Posterior cingulate gyrus (tissue), 11 donors: ENCODE measurements at regions of chr1 and their contacts with region 1.

Region 1: GRCh38 chr1:237562242-237562823 is 328.4 kb downstream of the ZP4 start:
- DNase-seq: no peak

Region 2: DNA sequence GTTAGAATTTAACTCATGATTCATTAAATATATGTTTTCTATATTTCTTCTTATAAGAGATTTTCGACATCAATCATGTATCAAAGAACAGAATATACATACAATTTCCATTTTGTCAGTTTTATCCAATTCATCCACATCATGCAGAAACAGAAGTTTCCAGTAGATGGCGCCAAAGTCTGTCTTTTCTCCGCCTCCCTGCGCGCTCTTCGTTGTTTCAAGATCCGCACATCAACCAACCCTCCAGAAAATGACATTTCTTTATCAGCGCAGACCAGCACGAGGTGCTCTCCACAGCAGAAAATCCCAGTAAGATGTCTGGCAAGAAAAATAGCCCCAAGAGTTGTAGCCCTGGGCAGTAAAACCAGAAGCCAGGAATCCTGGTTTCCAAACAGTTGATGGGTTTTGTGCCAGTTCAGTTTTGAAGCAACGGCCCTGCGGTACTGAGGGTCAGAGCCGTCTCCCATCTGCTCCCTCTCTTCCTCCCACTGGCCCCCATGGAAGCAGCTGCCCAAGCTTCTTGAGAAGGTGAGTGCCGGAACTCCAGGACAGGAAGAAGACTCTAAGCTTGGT is 1458.6 kb before region 1 on chr1:
- intact Hi-C with region 1: loop called (anchors 10 kb)
- DNase-seq: peak in 6 of 10 donors; percentile 24 to 91 (median 58)

Region 3: DNA sequence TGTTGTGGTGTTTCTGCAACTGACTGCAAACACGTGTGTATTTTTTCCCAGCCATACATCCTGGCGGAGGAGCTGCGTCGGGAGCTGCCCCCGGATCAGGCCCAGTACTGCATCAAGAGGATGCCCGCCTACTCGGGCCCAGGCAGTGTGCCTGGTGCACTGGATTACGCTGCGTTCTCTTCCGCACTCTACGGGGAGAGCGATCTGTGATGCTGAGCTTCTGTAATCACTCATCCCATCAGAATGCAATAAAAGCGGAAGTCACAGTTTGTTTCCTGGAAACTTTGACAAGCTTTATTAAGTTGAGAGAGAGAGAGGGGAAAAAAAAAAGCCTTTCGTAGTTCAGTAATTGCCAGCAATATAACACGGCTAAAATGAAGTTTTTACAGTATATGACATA is 799.9 kb before region 1 on chr1:
- intact Hi-C with region 1: loop called (anchors 10 kb)
- DNase-seq: peak in 4 of 10 donors; percentile 15 to 86 (median 30)

Region 4: DNA sequence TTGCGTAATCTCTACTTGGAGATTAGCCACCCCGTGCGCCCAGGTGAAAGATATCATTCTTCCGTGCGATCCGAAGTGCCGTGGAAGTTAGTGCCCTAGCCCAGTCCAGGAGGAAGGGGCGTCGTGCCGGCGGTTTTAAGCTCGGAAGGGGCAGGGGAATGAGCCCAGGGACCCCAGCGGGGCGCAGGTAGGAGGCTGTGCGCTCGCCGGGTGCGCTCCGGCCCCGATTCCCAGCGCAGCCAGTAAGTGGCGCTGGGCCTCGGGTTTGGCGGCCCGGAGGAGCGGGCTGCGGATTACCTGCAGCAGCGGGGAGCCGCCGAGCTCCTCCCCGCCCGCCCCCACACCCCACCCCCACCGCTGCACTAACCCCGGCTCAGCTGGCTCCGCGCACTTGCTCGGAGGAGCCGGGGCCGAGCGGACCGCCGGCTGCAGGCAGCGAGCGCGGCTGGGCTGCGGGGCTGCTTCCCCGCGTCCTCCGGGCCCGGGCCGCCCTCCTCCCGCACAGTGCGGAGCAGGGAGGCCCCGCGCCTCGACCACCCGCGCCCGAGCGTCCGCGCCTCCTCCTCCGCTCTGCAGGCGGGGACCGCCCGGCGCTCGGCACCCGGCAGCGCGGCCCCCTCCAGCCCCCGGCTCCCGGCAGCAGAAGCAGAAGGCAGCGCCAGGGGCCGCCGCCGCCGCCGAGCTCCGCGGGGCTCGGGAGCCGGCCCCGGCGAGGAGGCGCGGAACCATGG is 520.4 kb before region 1 on chr1 and contains the start of gene RYR2:
- intact Hi-C with region 1: loop called (anchors 10 kb)
- DNase-seq: peak in 9 of 10 donors; percentile 23 to 95 (median 52)